ENCODE measurements at regions of chr3 and their contacts with region 1.

Region 1: DNA sequence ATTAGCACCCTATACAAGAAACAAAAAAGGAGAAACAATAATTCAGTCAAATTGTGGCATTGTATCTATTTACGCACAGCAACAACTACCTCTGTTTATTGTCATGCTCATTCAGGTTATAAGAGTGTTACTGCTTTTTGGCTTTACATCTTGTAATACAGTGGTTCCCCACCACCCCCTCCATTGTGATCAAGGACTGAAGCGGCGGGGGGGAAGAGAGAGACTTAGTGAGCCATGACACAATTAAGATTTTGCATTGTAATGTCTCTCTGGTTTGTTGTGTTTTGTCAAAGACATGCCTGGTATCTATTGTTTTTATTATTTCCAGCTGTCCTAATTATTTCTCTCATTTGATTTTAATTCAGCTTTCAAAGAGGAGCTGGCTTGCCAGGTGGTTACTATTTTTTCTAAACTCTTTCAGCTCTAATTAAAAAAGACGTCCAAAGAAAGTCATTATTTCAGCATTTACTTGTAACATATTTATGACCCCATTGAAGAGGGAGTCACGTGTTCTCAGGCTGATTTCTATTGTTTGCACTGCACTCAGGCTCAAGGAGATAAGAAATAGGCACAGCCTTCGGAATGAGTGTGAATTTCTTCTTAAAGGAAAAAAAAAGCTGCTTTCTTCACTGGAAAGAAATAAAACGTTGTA is 234.4 kb upstream of the TBL1XR1 start:
- DNase-seq: no peak
- ATAC-seq: no peak
- H3K4me3 ChIP-seq: no peak overlapping the region
- H3K27ac ChIP-seq: no peak overlapping the region
- H3K4me1 ChIP-seq: no peaks in the 10 kb centered on the region
- H3K27me3 ChIP-seq: no peaks in the 10 kb centered on the region

Region 2: DNA sequence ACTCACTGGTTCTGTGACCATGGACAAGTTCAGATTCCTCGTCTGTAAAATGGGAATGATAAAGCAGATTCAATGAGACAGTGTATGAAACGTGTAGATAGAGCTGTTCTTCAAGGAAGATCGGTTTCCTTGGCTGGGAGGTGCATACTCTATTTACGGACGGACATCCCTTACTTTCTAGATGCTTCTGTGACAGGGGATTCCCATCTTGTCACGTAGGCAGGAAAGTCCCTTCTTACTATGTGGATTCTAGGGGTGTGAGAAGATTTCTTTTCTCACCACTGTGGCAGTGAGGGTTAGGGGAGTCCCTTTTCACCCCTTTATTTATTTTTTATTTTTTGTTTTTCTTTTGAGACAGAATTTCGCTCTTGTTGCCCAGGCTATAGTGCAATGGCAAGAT is 53.5 kb before region 1 on chr3:
- intact Hi-C with region 1: loop called in 1 of 2 experiments (anchors 10 kb)
- DNase-seq: no peak
- ATAC-seq: no peak
- H3K4me3 ChIP-seq: no peak overlapping the region
- H3K27ac ChIP-seq: no peak overlapping the region
- H3K4me1 ChIP-seq: peaks cover 0 to 7% of the 10 kb centered on the region in 2 donors
- H3K27me3 ChIP-seq: no peaks in the 10 kb centered on the region